ENCODE measurements at regions of chr13 and their contacts with region 1.

Region 1: DNA sequence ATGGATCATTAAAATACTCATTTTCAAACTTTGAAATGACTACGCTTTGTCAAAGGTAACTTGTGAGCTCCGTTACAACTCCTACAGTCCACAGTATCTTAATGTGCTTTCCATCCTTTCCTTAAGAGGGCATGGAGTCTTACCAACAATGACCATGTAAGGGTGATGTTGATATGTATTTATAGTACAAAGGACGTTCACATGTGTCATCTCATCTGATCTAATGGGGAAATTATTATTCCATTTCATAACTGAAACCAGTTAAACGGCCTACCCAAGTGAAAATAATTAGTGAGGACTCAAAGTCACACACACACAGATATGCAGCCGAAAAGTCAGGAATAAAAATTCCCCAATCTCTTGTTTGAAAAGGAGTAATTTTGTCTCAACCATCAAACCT is 9.6 kb downstream of the USP12 start:
- H3K4me3 Mint-ChIP-seq: no peak overlapping the region
- H3K27ac Mint-ChIP-seq: no peak overlapping the region
- H3K4me1 Mint-ChIP-seq: peaks cover 58% of the 10 kb centered on the region
- H3K27me3 Mint-ChIP-seq: no peaks in the 10 kb centered on the region

Region 2: GRCh38 chr13:26996965-26997752 is 164.8 kb before region 1 on chr13:
- intact Hi-C with region 1: no loop called
- H3K4me3 Mint-ChIP-seq: no peak overlapping the region
- H3K27ac Mint-ChIP-seq: no peak overlapping the region
- H3K4me1 Mint-ChIP-seq: no peaks in the 10 kb centered on the region
- H3K27me3 Mint-ChIP-seq: no peaks in the 10 kb centered on the region

Region 3: GRCh38 chr13:27270594-27271520 is 108.9 kb after region 1 on chr13 and contains the start of gene RASL11A:
- intact Hi-C with region 1: loop called (anchors 5 kb)
- H3K4me3 Mint-ChIP-seq: peak within 1 kb of the TSS; percentile 89
- H3K27ac Mint-ChIP-seq: peak within 1 kb of the TSS; percentile 55
- H3K4me1 Mint-ChIP-seq: peaks cover 40% of the 10 kb centered on the region
- H3K27me3 Mint-ChIP-seq: peaks cover 34% of the 10 kb centered on the region

Measured in dendritic cell treated with granulocyte-macrophage colony-stimulating factor and Interleukin-4, amounts not matched to agents 40 ng/mL and 50 ng/mL, for 4 days (primary cell).